Left cardiac atrium (tissue), 4 donors: ENCODE measurements at regions of chr1 and their contacts with region 1.

Region 1: GRCh38 chr1:11719313-11720032 is 16.5 kb upstream of the AGTRAP start:
- DNase-seq: peak; percentile 87
- ATAC-seq: peak; percentile 77 to 85

Region 2: DNA sequence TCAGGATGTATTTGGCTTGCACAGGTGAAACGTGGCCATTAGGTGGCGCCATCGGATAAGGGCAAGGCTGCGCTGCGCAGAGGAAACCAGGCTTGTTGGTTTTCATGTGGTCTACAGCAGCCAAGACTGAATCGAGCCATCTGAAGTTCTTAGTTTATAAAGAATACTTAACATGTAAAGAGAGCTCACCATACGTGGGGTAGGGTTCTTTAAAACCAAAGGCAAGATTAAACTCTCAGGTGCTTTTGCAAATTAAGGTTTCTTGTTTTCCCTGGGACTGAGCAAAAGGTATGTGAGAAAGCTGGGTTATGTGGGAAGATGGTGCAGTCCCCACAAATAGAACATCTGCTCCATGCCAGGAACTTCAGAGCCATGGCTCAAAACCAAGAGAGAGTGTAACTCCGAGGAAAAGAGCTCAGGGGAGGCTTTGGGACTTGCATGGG is 681.7 kb before region 1 on chr1:
- intact Hi-C with region 1: loop called in 1 of 2 experiments (anchors 5 kb)
- DNase-seq: peak; percentile 88
- ATAC-seq: peak; percentile 92 to 97

Region 3: GRCh38 chr1:11413986-11414391 is 305.5 kb before region 1 on chr1:
- intact Hi-C with region 1: no loop called
- DNase-seq: no peak
- ATAC-seq: no peak

Region 4: DNA sequence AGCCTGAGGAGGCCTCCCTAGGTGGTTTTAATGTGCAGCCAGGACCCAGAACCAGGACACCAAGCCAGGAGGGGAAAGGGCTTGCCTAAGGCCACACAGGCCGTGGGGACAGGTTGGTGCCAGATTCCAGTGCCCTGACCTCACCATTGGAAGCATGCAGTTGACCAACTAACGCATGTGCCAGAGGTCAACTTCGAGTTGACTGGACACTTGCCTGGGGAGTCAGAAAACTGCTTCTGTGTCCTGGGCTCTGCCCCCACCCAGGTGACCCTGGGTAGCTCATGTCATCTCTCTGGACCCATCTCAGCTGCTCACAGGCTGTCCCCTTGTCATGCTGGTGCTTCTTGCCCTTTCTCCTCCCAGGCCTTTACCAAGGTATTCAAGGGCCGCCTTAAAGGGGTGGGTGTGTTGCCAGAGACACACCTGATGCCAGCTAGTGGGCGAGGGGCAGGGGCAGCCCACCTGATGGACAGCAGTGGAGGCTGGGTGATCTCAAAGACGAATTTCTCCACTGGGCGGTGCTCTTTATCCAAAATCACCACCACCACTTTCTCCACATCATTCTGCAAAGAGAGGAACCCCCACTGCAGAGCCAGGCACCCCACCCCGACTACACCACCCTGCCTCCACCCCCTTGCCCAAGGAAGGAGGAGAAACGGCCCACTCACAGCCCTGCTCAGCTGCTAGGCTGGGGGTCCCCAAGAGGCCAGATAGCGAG is 42.9 kb before region 1 on chr1:
- intact Hi-C with region 1: loop called in 1 of 2 experiments (anchors 5 kb)
- DNase-seq: no peak
- ATAC-seq: no peak